Activated T-helper 1 cell treated with anti-CD3 and anti-CD28 coated beads, Interleukin-12 subunit alpha, Interleukin-12 subunit beta, Interleukin-2, Interleukin-4 antibody, amounts not matched to agents 30 ng/mL and 10 ng/mL and 1 ng/mL, durations not matched to agents 14 hours and 24 hours and 36 hours (primary cell): ENCODE measurements at regions of chr12 and their contacts with region 1.

Region 1: GRCh38 chr12:7645394-7646177 is 20.1 kb downstream of the APOBEC1 start:
- DNase-seq: no peak
- H3K4me3 Mint-ChIP-seq: no peak overlapping the region
- H3K27ac Mint-ChIP-seq: no peak overlapping the region
- H3K4me1 Mint-ChIP-seq: peaks cover 6% of the 10 kb centered on the region
- H3K27me3 Mint-ChIP-seq: peaks cover 5% of the 10 kb centered on the region

Region 2: DNA sequence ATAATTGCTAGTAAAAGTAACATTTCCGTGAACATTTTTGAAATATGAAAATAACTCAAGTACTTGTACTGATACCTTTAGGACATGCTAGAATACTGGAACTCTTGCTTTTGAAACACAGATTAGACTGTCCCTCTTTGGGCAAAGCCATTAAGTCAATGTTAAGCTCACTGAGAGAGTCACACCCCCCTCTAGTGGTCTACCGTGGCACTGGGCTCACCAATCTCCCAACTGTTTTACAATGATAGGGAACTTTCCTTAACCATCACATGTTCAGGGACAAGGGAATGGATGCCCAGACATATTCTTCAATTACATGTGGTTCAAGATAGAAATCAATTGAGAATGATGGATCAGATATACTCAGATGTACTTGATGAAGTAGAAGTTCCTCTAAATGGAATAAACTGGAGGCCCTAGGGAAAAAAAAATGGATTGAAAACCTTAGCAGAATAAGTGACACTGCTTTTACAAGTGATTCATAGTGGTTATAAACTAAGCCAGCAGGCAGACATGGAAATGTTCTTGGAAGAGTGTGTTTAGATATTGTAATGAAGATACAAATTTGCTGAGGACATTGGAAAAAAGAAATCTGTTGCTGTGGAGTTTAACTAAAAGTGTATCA is 161.4 kb after region 1 on chr12:
- intact Hi-C with region 1: loop called (anchors 2 kb)
- DNase-seq: peak; percentile 18
- H3K4me3 Mint-ChIP-seq: no peak overlapping the region
- H3K27ac Mint-ChIP-seq: no peak overlapping the region
- H3K4me1 Mint-ChIP-seq: no peaks in the 10 kb centered on the region
- H3K27me3 Mint-ChIP-seq: peaks cover 4% of the 10 kb centered on the region